Panc1 (cell line): ENCODE measurements at regions of chr15 and their contacts with region 1.

Region 1: GRCh38 chr15:34665498-34666116 is 82.2 kb upstream of the GOLGA8B start:
- DNase-seq: no peak
- ATAC-seq: no peak
- H3K4me3 ChIP-seq: no peak overlapping the region
- H3K27ac ChIP-seq: no peak overlapping the region
- H3K4me1 ChIP-seq: no peaks in the 10 kb centered on the region
- H3K27me3 ChIP-seq: peaks cover 6% of the 10 kb centered on the region; the same call in 1 of the 2 replicates
- CTCF ChIP-seq: no peak

Region 2: DNA sequence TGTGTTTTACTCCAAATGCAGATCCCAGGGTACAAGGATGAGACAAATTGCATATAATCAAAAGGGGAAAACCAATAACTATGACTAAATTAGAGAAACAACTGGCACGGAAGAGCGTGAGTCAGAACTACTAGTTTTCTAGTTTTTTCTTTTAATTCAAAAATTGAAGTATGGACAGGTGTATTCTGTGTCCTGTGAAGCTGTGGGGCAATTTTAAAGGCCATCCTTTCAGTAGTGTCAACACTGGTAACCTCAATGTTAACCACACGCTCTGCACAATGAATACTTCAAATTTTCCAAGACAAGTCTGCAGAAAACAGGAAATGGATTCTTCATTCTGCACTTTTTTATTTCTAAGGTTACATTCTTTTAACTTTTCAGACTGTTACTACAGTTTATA is 195.5 kb before region 1 on chr15:
- CTCF ChIA-PET with region 1: no interaction called
- POLR2A ChIA-PET with region 1: no interaction called
- in situ Hi-C with region 1: no loop called
- intact Hi-C with region 1: no loop called
- DNase-seq: no peak
- ATAC-seq: no peak
- H3K4me3 ChIP-seq: no peak overlapping the region
- H3K27ac ChIP-seq: no peak overlapping the region
- H3K4me1 ChIP-seq: no peaks in the 10 kb centered on the region
- H3K27me3 ChIP-seq: peaks cover 4% of the 10 kb centered on the region; the same call in 1 of the 2 replicates
- CTCF ChIP-seq: no peak

Region 3: GRCh38 chr15:34708422-34708821 is 42.8 kb after region 1 on chr15:
- CTCF ChIA-PET with region 1: interaction called, 12 read pairs
- POLR2A ChIA-PET with region 1: no interaction called
- in situ Hi-C with region 1: no loop called
- intact Hi-C with region 1: no loop called
- DNase-seq: peak; percentile 28
- ATAC-seq: peak; percentile 90
- H3K4me3 ChIP-seq: no peak overlapping the region
- H3K27ac ChIP-seq: no peak overlapping the region
- H3K4me1 ChIP-seq: no peaks in the 10 kb centered on the region
- H3K27me3 ChIP-seq: peaks cover 7% of the 10 kb centered on the region
- CTCF ChIP-seq: peak; percentile 87

Region 4: GRCh38 chr15:34889476-34889875 is 223.9 kb after region 1 on chr15:
- CTCF ChIA-PET with region 1: no interaction called
- POLR2A ChIA-PET with region 1: no interaction called
- in situ Hi-C with region 1: no loop called
- intact Hi-C with region 1: no loop called
- DNase-seq: no peak
- ATAC-seq: no peak
- H3K4me3 ChIP-seq: no peak overlapping the region
- H3K27ac ChIP-seq: no peak overlapping the region
- H3K4me1 ChIP-seq: no peaks in the 10 kb centered on the region
- H3K27me3 ChIP-seq: no peaks in the 10 kb centered on the region
- CTCF ChIP-seq: no peak